Dorsolateral prefrontal cortex (tissue), 120 donors: ENCODE measurements at regions of chr6 and their contacts with region 1.

Region 1: GRCh38 chr6:156564127-156564806 is 212.9 kb upstream of the ARID1B start:
- DNase-seq: peak; percentile 66 to 88 (median 80)
- H3K4me3 ChIP-seq: peak overlapping the region in 11 of 59 donors; percentile 2 to 31 (median 9)
- H3K27ac ChIP-seq: peak overlapping the region in 2 of 59 donors; percentile 7 to 33
- H3K27me3 ChIP-seq: peaks cover 0 to 4% (median 0%) of the 10 kb centered on the region in 45 donors
- CTCF ChIP-seq: peak; percentile 77 to 98 (median 93)

Region 2: GRCh38 chr6:155327326-155328073 is 1236.8 kb before region 1 on chr6:
- intact Hi-C with region 1: loop called in 1 of 2 experiments (anchors 10 kb)
- DNase-seq: peak in 4 of 10 donors; percentile 24 to 50 (median 42)
- H3K4me3 ChIP-seq: no peak overlapping the region
- H3K27ac ChIP-seq: no peak overlapping the region
- H3K27me3 ChIP-seq: no peaks in the 10 kb centered on the region
- CTCF ChIP-seq: peak; percentile 72 to 97 (median 90)

Region 3: DNA sequence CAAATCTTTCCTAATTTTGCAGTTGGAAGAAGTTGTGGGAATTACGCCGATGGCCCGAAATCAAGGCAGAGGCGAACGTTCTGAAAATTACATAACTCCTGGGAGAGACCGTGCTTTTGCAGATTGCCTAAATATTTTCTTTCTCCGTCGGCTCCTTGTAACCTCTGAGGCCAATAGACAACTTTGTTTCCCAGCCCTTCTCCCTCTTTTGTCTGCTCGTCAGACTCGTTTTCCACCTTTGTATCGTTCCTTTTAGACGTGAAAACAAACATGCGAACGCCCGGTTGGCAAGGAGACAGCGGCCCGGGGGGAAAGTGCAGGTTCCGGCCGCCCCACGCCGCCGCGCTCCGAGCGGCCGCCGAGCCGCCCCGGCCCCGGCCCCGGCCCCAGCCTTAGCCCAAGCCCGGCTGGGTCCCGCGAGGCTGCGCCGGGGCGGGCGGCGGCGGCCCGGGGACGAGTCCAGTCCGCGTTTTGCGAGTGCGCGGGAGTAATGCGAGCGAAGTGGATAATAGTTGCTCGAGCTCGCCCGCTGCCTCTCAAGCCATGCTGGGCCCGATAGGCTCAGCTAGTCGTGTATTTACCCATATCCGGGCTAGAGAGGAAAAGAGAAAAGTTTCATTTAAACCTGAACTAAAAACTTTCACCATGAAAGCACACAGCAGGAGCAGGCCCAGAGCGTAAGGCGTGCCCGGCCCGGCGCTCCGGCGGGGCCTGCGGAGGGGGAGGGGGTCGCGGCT is 212.7 kb after region 1 on chr6 and contains the start of gene ARID1B:
- intact Hi-C with region 1: loop called (anchors 5 to 10 kb)
- DNase-seq: peak; percentile 63 to 86 (median 76)
- H3K4me3 ChIP-seq: peak within 1 kb of the TSS; percentile 43 to 89 (median 77)
- H3K27ac ChIP-seq: peak within 1 kb of the TSS; percentile 93 to 100 (median 99)
- H3K27me3 ChIP-seq: no peaks in the 10 kb centered on the region
- CTCF ChIP-seq: peak in 1 of 56 donors; percentile 9
- total RNA-seq, gene ARID1B: 96.8 to 200 (median 147) TPM

Region 4: GRCh38 chr6:156866220-156867015 is 302.2 kb after region 1 on chr6:
- intact Hi-C with region 1: loop called in 1 of 2 experiments (anchors 10 kb)
- DNase-seq: peak in 7 of 10 donors; percentile 29 to 63 (median 54)
- H3K4me3 ChIP-seq: no peak overlapping the region
- H3K27ac ChIP-seq: peak overlapping the region in 14 of 59 donors; percentile 0 to 41 (median 16)
- H3K27me3 ChIP-seq: no peaks in the 10 kb centered on the region
- CTCF ChIP-seq: peak in 26 of 56 donors; percentile 13 to 58 (median 32)

Region 5: DNA sequence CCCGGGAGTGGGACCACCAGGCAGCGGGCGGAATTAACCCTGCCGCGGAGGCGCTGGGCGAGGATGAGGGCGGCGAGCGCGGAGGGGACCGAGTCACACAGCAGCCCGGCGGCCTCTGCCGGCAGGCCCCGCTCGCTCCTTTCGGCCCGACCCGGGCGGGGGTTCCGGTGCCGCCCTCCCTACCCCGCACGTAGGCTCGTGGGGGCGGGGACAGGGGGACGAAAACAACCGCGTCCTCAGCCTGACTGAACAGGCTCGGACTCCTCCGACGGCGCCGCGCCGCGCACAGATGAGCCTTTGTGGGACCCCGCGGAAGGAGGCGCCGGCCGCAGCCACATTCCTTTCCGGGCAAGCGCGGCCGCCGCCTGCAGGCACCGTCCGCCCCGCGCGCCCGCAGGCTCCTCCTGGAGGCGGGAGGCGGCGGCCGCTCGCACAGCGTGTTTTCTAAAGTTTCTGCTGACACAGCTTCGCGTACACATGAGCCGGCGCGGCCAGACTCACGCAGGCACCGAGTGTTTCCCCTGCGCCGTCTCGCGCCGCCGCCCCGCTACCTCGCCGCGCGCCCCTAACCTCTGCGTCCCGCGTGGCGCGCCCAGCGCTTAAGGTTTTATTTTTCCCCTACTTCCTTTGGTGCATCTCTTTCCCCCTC is 457.2 kb after region 1 on chr6:
- intact Hi-C with region 1: loop called (anchors 10 kb)
- DNase-seq: peak; percentile 82 to 93 (median 89)
- H3K4me3 ChIP-seq: peak overlapping the region; percentile 48 to 98 (median 83)
- H3K27ac ChIP-seq: peak overlapping the region; percentile 89 to 100 (median 99)
- H3K27me3 ChIP-seq: no peaks in the 10 kb centered on the region
- CTCF ChIP-seq: peak in 51 of 56 donors; percentile 5 to 67 (median 43)

Region 6: GRCh38 chr6:157184202-157185020 is 620.1 kb after region 1 on chr6:
- intact Hi-C with region 1: loop called (anchors 10 kb)
- DNase-seq: peak; percentile 67 to 82 (median 76)
- H3K4me3 ChIP-seq: peak overlapping the region in 53 of 59 donors; percentile 2 to 62 (median 40)
- H3K27ac ChIP-seq: peak overlapping the region in 31 of 59 donors; percentile 1 to 72 (median 42)
- H3K27me3 ChIP-seq: no peaks in the 10 kb centered on the region
- CTCF ChIP-seq: peak; percentile 57 to 98 (median 91)